ENCODE measurements at regions of chr19 and their contacts with region 1.

Region 1: GRCh38 chr19:38849860-38850435 is at the start of gene HNRNPL:
- DNase-seq: peak in 1 of 2 donors; percentile 100
- ATAC-seq: peak in 1 of 2 donors; percentile 80
- H3K4me3 ChIP-seq: peak within 1 kb of the TSS; percentile 63 to 99 (median 92)
- H3K27ac ChIP-seq: peak within 1 kb of the TSS; percentile 98 to 100 (median 100)
- H3K4me1 ChIP-seq: peaks cover 45 to 52% of the 10 kb centered on the region in 2 donors
- H3K27me3 ChIP-seq: no peaks in the 10 kb centered on the region
- CTCF ChIP-seq: peak in 4 of 5 experiments; percentile 47 to 69 (median 55)
- POLR2A ChIP-seq: peak; percentile 98
- total RNA-seq, gene HNRNPL: 88.3 to 172 (median 126) TPM

Region 2: GRCh38 chr19:38618590-38619360 is 231.2 kb before region 1 on chr19 and contains the start of gene EIF3K:
- in situ Hi-C with region 1: loop called in 1 of 4 experiments (anchors 10 kb)
- intact Hi-C with region 1: no loop called
- DNase-seq: peak; percentile 97 to 99
- ATAC-seq: peak; percentile 94 to 97
- H3K4me3 ChIP-seq: peak within 1 kb of the TSS; percentile 80 to 95 (median 92)
- H3K27ac ChIP-seq: peak within 1 kb of the TSS; percentile 90 to 96 (median 94)
- H3K4me1 ChIP-seq: peaks cover 18% of the 10 kb centered on the region in 2 donors
- H3K27me3 ChIP-seq: no peaks in the 10 kb centered on the region
- CTCF ChIP-seq: no peak
- POLR2A ChIP-seq: peak; percentile 85 to 89
- total RNA-seq, gene EIF3K: 619 to 975 (median 681) TPM

Region 3: DNA sequence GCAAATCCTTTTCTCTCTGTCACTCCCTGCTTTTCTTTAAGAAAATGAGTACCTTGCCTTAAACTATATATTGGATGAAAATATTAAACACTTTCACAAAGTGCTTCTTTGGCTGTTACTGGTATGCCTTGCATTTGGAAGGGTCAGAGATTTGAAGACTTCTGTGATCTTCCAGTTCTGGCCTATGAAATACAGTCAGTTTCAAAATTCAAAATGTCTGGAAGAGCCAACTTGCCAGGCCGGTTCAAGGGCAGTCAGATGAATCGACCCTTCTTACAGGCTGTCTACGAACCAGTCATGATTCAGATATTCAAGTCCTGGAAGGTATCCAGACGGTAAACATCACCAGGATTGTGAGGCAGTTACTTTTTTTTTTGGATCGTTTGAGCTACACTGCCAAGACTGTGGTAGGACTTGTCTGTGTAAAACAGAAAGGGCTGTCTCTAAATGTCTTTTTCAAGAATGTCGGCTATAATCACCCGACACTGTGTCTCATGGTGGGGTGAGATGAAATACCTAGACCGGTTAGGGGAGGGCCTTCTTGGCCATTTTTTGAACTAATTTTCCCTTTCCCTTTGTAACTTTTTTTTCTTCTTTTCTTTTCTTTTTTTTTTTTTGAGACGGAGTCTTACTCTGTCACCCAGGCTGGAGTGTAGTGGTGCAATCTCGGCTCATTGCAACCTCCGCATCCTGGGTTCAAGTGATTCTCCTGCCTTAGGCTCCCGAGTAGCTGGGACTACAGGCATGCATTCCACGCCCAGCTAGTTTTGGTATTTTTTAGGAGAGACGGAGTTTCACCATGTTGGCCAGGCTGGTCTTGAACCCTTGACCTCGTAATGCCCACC is 191.3 kb before region 1 on chr19:
- in situ Hi-C with region 1: no loop called
- intact Hi-C with region 1: loop called (anchors 1 kb)
- DNase-seq: peak in 1 of 2 donors; percentile 59
- ATAC-seq: peak; percentile 74 to 79
- H3K4me3 ChIP-seq: peak overlapping the region in 2 of 4 donors; percentile 12 to 18
- H3K27ac ChIP-seq: peak overlapping the region; percentile 98 to 100 (median 99)
- H3K4me1 ChIP-seq: peaks cover 97 to 98% of the 10 kb centered on the region in 2 donors
- H3K27me3 ChIP-seq: no peaks in the 10 kb centered on the region
- CTCF ChIP-seq: no peak
- POLR2A ChIP-seq: peak in 1 of 2 donors; percentile 7

Region 4: DNA sequence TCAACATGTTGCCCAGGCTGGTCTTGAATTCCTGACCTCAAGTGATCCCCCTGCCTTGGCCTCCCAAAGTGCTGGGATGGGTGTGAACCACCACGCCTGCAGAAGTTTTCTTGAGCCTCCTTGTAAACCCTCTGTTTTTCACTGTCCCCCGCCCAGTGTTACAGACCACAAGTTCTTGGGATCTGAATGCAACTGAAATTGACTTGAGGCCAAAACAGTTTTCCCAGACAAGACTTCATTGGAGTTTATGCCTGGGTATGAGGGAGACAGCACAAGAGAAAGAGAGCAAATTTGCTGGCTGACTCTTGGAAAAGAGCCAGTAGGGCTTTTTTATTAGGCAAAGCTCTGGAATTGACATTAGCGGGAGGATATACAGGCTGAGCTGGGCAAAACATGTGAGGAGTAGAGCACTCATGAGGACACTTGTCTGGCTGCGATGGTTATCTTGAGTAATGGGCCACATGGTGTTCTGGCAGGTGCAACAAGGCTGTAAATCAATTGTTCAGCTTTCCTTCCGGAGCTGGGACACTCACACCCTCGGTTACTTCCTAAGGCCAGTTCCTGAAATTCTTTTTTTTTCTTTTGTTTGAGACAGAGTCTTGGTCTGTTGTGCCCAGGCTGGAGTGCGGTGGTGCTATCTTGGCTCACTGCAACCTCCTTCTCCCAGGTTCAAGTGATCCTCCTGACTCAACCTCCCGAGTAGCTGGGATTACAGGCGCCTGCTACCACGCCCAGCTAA is 12.5 kb after region 1 on chr19:
- in situ Hi-C with region 1: no loop called
- intact Hi-C with region 1: loop called (anchors 1 kb)
- DNase-seq: peak; percentile 78 to 86
- ATAC-seq: peak; percentile 99
- H3K4me3 ChIP-seq: no peak overlapping the region
- H3K27ac ChIP-seq: peak overlapping the region; percentile 71 to 87 (median 82)
- H3K4me1 ChIP-seq: peaks cover 16 to 25% of the 10 kb centered on the region in 2 donors
- H3K27me3 ChIP-seq: no peaks in the 10 kb centered on the region
- CTCF ChIP-seq: no peak
- POLR2A ChIP-seq: no peak

Region 5: GRCh38 chr19:38899447-38900219 is 49.7 kb after region 1 on chr19 and contains the starts of genes NFKBIB and SIRT2:
- in situ Hi-C with region 1: loop called in 2 of 4 experiments (anchors 5 to 10 kb)
- intact Hi-C with region 1: loop called (anchors 1 kb)
- DNase-seq: peak; percentile 100
- ATAC-seq: peak; percentile 97 to 98
- H3K4me3 ChIP-seq: peak within 1 kb of the TSS; percentile 74 to 98 (median 90)
- H3K27ac ChIP-seq: peak within 1 kb of the TSS; percentile 90 to 99 (median 96)
- H3K4me1 ChIP-seq: peaks cover 45 to 50% of the 10 kb centered on the region in 2 donors
- H3K27me3 ChIP-seq: no peaks in the 10 kb centered on the region
- CTCF ChIP-seq: no peak
- POLR2A ChIP-seq: peak; percentile 94 to 98
- total RNA-seq, gene NFKBIB: 32.2 to 63.8 (median 53.6) TPM
- total RNA-seq, gene SIRT2: 208 to 327 (median 285) TPM

Region 6: GRCh38 chr19:38949580-38950367 is 99.8 kb after region 1 on chr19:
- in situ Hi-C with region 1: no loop called
- intact Hi-C with region 1: no loop called
- DNase-seq: peak; percentile 47 to 66
- ATAC-seq: peak; percentile 58 to 72
- H3K4me3 ChIP-seq: peak overlapping the region; percentile 33 to 50 (median 42)
- H3K27ac ChIP-seq: no peak overlapping the region
- H3K4me1 ChIP-seq: no peaks in the 10 kb centered on the region
- H3K27me3 ChIP-seq: peaks cover 0 to 9% (median 0%) of the 10 kb centered on the region in 3 donors
- CTCF ChIP-seq: no peak
- POLR2A ChIP-seq: no peak

Measured in gastrocnemius medialis (tissue), 4 donors.